ENCODE measurements at regions of chr1 and their contacts with region 1.

Region 1: DNA sequence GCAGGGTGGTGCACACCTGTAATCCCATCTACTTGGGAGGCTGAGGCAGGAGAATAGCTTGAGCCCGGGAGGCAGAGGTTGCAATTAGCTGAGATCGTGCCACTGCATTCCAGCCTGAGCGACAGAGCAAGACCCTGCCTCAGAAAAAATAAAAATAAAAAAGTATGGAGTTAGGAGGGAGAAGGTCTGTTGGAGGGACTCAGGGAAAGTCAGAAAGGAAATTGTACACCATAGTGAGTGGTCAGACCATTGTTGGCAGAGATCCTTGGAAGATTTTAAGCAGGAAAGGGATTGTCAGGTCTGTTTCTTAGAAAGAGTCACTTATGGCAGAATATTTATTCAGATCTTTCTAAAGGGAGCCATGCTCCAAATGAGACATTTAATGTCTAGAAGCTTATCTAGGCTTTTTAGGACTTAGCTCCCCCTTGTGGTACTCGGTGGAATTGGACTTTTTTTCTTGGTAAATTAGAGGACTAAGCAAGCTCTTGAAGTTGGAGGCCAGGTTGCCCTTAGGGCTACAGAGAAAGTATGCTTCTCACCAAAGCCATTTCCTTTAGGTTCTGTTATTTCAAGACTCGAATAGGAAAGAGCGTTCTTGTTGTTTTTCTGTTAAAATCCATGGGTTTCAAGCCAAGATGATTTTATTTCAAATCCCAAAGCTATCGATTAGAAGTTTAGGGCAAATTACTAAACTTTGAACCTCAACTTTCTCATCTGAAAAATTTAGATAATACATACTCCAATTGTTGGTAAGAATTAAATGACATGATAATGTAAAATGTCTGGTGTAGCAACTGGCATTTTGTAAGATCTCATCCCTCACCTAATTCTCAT is 16.5 kb downstream of the MIA3 start:
- DNase-seq: peak; percentile 65
- H3K4me3 ChIP-seq: no peak overlapping the region
- CTCF ChIP-seq: peak; percentile 68

Region 2: GRCh38 chr1:222589462-222590302 is 44.7 kb before region 1 on chr1 and contains the start of gene TAF1A:
- CTCF ChIA-PET with region 1: interaction called, 14 read pairs
- POLR2A ChIA-PET with region 1: interaction called, 3 read pairs
- DNase-seq: peak; percentile 7
- H3K4me3 ChIP-seq: peak within 1 kb of the TSS; percentile 72
- CTCF ChIP-seq: no peak

Region 3: DNA sequence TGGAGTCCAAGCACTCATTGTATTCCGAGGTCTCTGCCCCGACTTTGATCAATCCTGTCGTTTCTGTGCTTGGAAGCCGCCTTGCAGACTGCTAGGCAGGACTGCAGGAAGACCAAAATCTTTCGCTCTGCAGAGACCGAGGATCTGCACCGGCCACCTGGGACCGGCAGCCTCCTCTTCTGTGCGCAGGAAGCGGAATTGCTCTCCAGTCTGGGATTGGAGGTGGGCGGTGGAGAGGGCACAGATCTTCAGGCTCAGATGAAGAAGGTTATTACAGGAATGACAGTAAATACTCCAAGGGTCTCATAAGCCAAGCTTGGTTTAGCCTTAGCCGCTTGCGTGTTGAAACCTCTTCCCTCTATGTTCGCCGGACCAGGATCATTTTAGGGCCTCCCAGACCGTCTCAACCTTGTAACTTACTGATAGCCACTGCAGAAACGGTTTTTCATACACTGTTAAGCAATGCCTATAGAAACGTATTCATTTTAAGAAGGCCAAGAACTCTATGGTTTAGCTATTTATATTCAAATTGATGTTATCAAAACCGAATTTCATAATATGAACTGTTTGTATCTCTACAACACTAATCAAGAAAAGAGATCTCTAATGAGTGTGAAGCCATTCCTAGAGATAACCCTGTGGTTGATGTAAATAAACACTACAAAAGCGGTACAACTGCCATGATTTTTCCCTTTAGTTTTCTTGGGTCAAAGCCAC is 15.4 kb before region 1 on chr1:
- CTCF ChIA-PET with region 1: interaction called, 82 read pairs
- POLR2A ChIA-PET with region 1: no interaction called
- DNase-seq: no peak
- H3K4me3 ChIP-seq: peak overlapping the region; percentile 81
- CTCF ChIP-seq: no peak